ENCODE measurements at regions of chr1 and their contacts with region 1.

Region 1: DNA sequence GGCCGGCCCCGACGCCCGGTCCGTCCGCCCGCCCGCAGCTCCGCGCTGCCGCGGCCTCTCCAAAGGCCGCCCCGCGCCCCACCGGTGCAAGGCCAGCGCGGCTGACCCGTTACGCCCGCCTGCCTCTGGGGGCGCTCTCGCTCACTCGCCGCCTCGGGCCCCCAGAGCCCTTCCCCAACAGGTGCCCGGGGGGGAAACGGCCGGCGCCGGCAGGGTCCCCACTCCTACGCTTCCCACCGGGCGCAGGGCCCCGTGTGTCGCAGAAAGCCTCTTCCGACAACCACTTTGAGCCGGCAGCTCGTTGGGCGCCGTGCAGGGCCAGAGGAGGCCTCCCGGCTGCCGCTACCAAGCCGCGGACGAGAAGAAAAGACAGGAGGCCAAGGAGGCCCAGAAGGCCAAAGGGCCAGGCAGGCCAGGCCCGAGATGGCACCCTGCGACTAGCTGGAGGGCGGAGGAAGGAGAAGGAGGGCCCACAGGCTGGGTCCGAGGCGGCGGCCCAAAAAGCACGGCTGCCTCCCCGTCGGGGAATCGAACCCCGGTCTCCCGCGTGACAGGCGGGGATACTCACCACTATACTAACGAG is 64.9 kb upstream of the FCGR2A start:
- DNase-seq: peak; percentile 81
- H3K4me3 Mint-ChIP-seq: peak overlapping the region; percentile 85
- H3K27ac Mint-ChIP-seq: peak overlapping the region; percentile 84
- H3K4me1 Mint-ChIP-seq: peaks cover 12% of the 10 kb centered on the region
- H3K27me3 Mint-ChIP-seq: peaks cover 30% of the 10 kb centered on the region

Region 2: GRCh38 chr1:161399257-161399998 is 41.0 kb before region 1 on chr1:
- CTCF ChIA-PET with region 1: interaction called, 10 read pairs
- POLR2A ChIA-PET with region 1: no interaction called
- intact Hi-C with region 1: loop called (anchors 10 kb)
- DNase-seq: peak; percentile 94
- H3K4me3 Mint-ChIP-seq: peak overlapping the region; percentile 93
- H3K27ac Mint-ChIP-seq: peak overlapping the region; percentile 99
- H3K4me1 Mint-ChIP-seq: peaks cover 37% of the 10 kb centered on the region
- H3K27me3 Mint-ChIP-seq: peaks cover 3% of the 10 kb centered on the region

Region 3: DNA sequence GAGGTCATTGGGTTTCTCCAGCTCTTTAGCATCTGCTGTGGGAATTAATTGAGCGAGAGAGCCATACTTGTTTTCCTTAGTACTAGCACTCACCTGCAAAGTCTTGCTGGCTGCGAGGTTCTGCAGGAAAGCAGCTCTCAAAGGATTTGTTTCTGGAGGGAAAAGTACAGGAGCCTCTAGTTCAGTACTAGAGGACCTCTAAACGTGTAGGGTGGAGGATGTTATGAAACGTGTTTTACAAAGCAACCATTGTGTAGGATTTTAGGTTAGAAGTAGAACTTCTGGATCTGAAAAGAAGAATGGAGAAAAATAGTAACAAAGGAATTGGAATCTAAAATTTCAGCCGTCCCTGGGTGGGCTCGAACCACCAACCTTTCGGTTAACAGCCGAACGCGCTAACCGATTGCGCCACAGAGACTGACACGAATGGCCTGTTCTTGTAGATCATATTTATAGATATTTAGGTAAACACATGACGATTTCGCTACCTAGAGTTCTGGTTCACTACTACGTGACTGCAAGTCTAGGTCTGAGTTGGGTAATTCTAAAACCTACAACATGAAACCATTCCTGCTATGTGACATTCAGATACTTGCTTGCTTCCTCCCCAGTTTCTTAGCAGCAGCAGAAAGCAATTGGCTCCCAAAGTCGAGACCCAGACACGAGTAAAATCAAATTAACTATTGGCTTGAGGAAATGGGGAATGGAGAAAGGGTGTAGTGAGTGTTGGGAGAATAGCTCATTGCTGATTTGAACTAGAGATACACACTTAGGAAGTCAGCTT is 12.5 kb before region 1 on chr1:
- CTCF ChIA-PET with region 1: interaction called, 24 read pairs
- POLR2A ChIA-PET with region 1: no interaction called
- intact Hi-C with region 1: no loop called
- DNase-seq: peak; percentile 56
- H3K4me3 Mint-ChIP-seq: peak overlapping the region; percentile 33
- H3K27ac Mint-ChIP-seq: peak overlapping the region; percentile 6
- H3K4me1 Mint-ChIP-seq: peaks cover 20% of the 10 kb centered on the region
- H3K27me3 Mint-ChIP-seq: peaks cover 40% of the 10 kb centered on the region